CD8-positive, alpha-beta T cell (primary cell): ENCODE measurements at regions of chr10 and their contacts with region 1.

Region 1: GRCh38 chr10:26556748-26557640 is 118.9 kb downstream of the APBB1IP start:
- DNase-seq: peak in 8 of 9 experiments; percentile 5 to 70 (median 34)
- ATAC-seq: peak; percentile 64
- H3K4me3 ChIP-seq: no peak overlapping the region
- H3K4me3 Mint-ChIP-seq: no peak overlapping the region
- H3K27ac ChIP-seq: no peak overlapping the region
- H3K27ac Mint-ChIP-seq: peak overlapping the region; percentile 91
- H3K4me1 ChIP-seq: no peaks in the 10 kb centered on the region
- H3K4me1 Mint-ChIP-seq: peaks cover 15% of the 10 kb centered on the region
- H3K27me3 ChIP-seq: no peaks in the 10 kb centered on the region
- H3K27me3 Mint-ChIP-seq: no peaks in the 10 kb centered on the region
- CTCF ChIP-seq: peak; percentile 99

Region 2: GRCh38 chr10:25701652-25702051 is 855.3 kb before region 1 on chr10:
- CTCF ChIA-PET with region 1: no interaction called
- POLR2A ChIA-PET with region 1: no interaction called
- intact Hi-C with region 1: loop called in 1 of 2 experiments (anchors 5 kb)
- DNase-seq: no peak
- ATAC-seq: no peak
- H3K4me3 ChIP-seq: no peak overlapping the region
- H3K4me3 Mint-ChIP-seq: no peak overlapping the region
- H3K27ac ChIP-seq: no peak overlapping the region
- H3K27ac Mint-ChIP-seq: no peak overlapping the region
- H3K4me1 ChIP-seq: no peaks in the 10 kb centered on the region
- H3K4me1 Mint-ChIP-seq: no peaks in the 10 kb centered on the region
- H3K27me3 ChIP-seq: no peaks in the 10 kb centered on the region
- H3K27me3 Mint-ChIP-seq: peaks cover 4% of the 10 kb centered on the region
- CTCF ChIP-seq: no peak

Region 3: DNA sequence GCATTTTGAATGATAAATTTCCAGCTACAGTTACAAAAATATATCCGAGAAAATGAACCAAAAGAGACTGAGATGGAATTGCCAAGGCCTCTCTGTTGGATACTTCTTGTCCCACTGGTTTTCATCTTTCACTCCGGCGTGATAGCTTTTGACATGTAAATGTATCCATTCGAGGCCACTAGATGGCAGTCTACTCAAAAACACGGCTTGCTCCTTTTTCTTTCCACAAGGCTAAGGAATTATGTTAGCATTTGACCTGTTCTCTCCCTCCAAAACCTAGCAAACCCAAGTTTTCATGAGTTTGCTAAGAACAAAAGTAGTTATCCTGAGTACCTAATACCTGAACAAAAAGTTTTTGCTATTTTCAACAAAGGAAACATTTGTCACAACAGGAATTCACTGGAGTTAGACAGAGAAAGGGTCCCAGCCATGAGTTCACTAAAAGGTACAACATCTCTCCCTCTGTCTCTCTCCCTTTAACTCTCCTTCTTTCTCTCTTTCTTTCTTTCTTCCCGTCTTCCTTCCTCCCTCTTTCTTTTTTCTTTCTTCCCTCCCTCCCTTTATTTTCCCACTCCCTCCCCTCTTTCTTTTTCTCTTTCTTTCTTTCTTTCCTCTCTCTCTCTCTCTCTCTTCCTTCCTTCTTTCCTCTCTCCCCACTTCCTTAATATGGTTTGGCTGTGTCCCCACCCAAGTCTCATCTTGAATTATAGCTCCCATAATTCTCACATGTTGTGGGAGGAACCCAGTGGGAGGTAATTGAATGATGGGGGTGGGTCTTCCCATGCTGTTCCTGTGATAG is 830.9 kb before region 1 on chr10:
- CTCF ChIA-PET with region 1: no interaction called
- POLR2A ChIA-PET with region 1: no interaction called
- intact Hi-C with region 1: loop called in 1 of 2 experiments (anchors 2 kb)
- DNase-seq: peak in 3 of 9 experiments; percentile 6 to 44 (median 29)
- ATAC-seq: no peak
- H3K4me3 ChIP-seq: no peak overlapping the region
- H3K4me3 Mint-ChIP-seq: no peak overlapping the region
- H3K27ac ChIP-seq: no peak overlapping the region
- H3K27ac Mint-ChIP-seq: no peak overlapping the region
- H3K4me1 ChIP-seq: no peaks in the 10 kb centered on the region
- H3K4me1 Mint-ChIP-seq: peaks cover 4% of the 10 kb centered on the region
- H3K27me3 ChIP-seq: no peaks in the 10 kb centered on the region
- H3K27me3 Mint-ChIP-seq: peaks cover 7% of the 10 kb centered on the region
- CTCF ChIP-seq: peak; percentile 71

Region 4: GRCh38 chr10:25875556-25876165 is 681.3 kb before region 1 on chr10:
- CTCF ChIA-PET with region 1: no interaction called
- POLR2A ChIA-PET with region 1: no interaction called
- intact Hi-C with region 1: loop called in 1 of 2 experiments (anchors 1 kb)
- DNase-seq: peak; percentile 21 to 66 (median 59)
- ATAC-seq: peak; percentile 62
- H3K4me3 ChIP-seq: no peak overlapping the region
- H3K4me3 Mint-ChIP-seq: no peak overlapping the region
- H3K27ac ChIP-seq: no peak overlapping the region
- H3K27ac Mint-ChIP-seq: no peak overlapping the region
- H3K4me1 ChIP-seq: no peaks in the 10 kb centered on the region
- H3K4me1 Mint-ChIP-seq: no peaks in the 10 kb centered on the region
- H3K27me3 ChIP-seq: no peaks in the 10 kb centered on the region
- H3K27me3 Mint-ChIP-seq: no peaks in the 10 kb centered on the region
- CTCF ChIP-seq: peak; percentile 67

Region 5: DNA sequence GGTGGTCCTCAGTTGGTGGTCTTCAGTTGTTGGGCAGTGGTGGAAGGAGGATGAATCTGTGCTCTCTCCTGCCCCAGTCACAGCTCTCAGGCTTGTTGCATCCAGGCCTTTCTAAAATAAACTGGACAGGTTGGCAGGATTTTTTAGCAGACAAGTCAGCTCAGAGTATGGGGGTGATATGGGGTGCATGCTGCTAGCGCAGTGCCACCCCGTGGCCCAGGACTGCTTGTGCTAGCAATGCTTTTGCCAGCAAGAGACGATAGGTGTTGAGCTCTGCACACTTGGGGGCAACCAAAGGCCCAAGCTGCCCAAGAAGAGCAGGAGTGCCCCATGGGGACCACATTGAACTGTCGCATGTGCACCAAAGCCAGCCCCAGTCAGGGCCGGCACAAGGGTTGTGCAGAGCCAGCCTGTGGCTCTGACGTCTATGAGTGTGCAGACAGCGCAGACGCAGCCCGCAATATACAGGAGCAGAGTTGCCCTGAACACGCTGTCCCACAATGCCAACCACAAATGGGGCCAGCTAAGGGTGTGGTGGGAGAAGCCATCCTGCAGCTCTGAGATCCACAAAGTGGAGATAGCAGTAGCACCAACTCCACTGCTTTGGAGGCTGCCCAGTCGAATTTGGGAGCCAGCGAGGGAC is 90.7 kb after region 1 on chr10:
- CTCF ChIA-PET with region 1: no interaction called
- POLR2A ChIA-PET with region 1: no interaction called
- intact Hi-C with region 1: no loop called
- DNase-seq: no peak
- ATAC-seq: no peak
- H3K4me3 ChIP-seq: no peak overlapping the region
- H3K4me3 Mint-ChIP-seq: no peak overlapping the region
- H3K27ac ChIP-seq: no peak overlapping the region
- H3K27ac Mint-ChIP-seq: no peak overlapping the region
- H3K4me1 ChIP-seq: no peaks in the 10 kb centered on the region
- H3K4me1 Mint-ChIP-seq: peaks cover 7% of the 10 kb centered on the region
- H3K27me3 ChIP-seq: no peaks in the 10 kb centered on the region
- H3K27me3 Mint-ChIP-seq: peaks cover 4% of the 10 kb centered on the region
- CTCF ChIP-seq: no peak